GM12878 (cell line): ENCODE measurements at regions of chr7 and their contacts with region 1.

Region 1: DNA sequence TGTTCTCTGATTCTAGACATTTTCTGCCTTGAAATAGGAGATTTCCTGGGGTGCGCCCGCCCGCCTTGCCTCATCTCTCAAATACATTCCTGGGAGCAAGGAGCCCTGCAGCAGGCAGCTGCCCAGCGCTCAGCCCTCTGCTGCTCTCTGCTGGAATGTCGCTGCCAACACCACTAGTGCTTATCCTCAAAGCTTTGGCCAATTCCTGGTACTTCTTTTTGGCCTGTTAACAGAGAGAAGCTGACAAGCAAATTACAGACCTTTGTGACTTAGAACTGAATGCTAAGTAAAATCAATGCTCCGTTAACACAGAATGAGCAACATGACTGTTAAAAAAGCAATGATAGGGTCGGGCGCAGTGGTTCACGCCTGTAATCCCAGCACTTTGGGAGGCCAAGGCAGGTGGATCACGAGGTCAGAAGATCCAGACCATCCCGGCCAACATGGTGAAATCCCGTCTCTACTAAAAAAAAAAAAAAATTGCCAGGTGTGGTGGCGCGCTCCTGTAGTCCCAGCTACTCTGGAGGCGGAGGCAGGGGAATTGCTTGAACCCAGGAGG is 41.9 kb upstream of the SYPL1 start:
- DNase-seq: peak; percentile 45
- ATAC-seq: peak; percentile 94
- H3K4me3 ChIP-seq: no peak overlapping the region
- H3K27ac ChIP-seq: no peak overlapping the region
- H3K4me1 ChIP-seq: peaks cover 26% of the 10 kb centered on the region
- H3K27me3 ChIP-seq: no peaks in the 10 kb centered on the region
- CTCF ChIP-seq: peak; percentile 94 to 97 (median 96)
- EP300 ChIP-seq: no peak
- POLR2A ChIP-seq: no peak
- RAD21 ChIP-seq: peak; percentile 99

Region 2: GRCh38 chr7:106050011-106050745 is 103.8 kb before region 1 on chr7:
- CTCF ChIA-PET with region 1: interaction called, 288 read pairs
- POLR2A ChIA-PET with region 1: no interaction called
- RAD21 ChIA-PET with region 1: interaction called, 133 read pairs
- SMC1A ChIA-PET with region 1: interaction called, 223 read pairs
- in situ Hi-C with region 1: loop called (anchors 5 kb)
- intact Hi-C with region 1: no loop called
- DNase-seq: no peak
- ATAC-seq: no peak
- H3K4me3 ChIP-seq: no peak overlapping the region
- H3K27ac ChIP-seq: no peak overlapping the region
- H3K4me1 ChIP-seq: no peaks in the 10 kb centered on the region
- H3K27me3 ChIP-seq: peaks cover 1 to 5% of the 10 kb centered on the region in 2 experiments; a peak in 2 of 4 replicates
- CTCF ChIP-seq: peak in 1 of 3 experiments; percentile 20; a peak in 2 of 6 replicates
- EP300 ChIP-seq: no peak
- POLR2A ChIP-seq: no peak
- RAD21 ChIP-seq: no peak

Region 3: GRCh38 chr7:106071356-106071998 is 82.5 kb before region 1 on chr7:
- CTCF ChIA-PET with region 1: interaction called, 67 read pairs
- POLR2A ChIA-PET with region 1: interaction called, 20 read pairs
- RAD21 ChIA-PET with region 1: interaction called, 39 read pairs
- SMC1A ChIA-PET with region 1: interaction called, 94 read pairs
- in situ Hi-C with region 1: no loop called
- intact Hi-C with region 1: no loop called
- DNase-seq: peak; percentile 98
- ATAC-seq: peak; percentile 89
- H3K4me3 ChIP-seq: peak overlapping the region; percentile 67
- H3K27ac ChIP-seq: peak overlapping the region; percentile 98
- H3K4me1 ChIP-seq: peaks cover 68% of the 10 kb centered on the region
- H3K27me3 ChIP-seq: no peaks in the 10 kb centered on the region
- CTCF ChIP-seq: no peak
- EP300 ChIP-seq: peak; percentile 71 to 78; a peak in 3 of 4 replicates
- POLR2A ChIP-seq: peak; percentile 79
- RAD21 ChIP-seq: peak; percentile 18; the same call in 1 of the 2 replicates

Region 4: GRCh38 chr7:106100863-106101629 is 52.9 kb before region 1 on chr7:
- CTCF ChIA-PET with region 1: interaction called, 24 read pairs
- POLR2A ChIA-PET with region 1: no interaction called
- RAD21 ChIA-PET with region 1: interaction called, 9 read pairs
- SMC1A ChIA-PET with region 1: interaction called, 13 read pairs
- in situ Hi-C with region 1: no loop called
- intact Hi-C with region 1: no loop called
- DNase-seq: no peak
- ATAC-seq: peak; percentile 8; the same call in 1 of the 3 replicates
- H3K4me3 ChIP-seq: 0 out of 2 replicates have a peak overlapping the region, but pooled peaks have one; percentile 9
- H3K27ac ChIP-seq: no peak overlapping the region
- H3K4me1 ChIP-seq: peaks cover 16% of the 10 kb centered on the region
- H3K27me3 ChIP-seq: no peaks in the 10 kb centered on the region
- CTCF ChIP-seq: no peak
- EP300 ChIP-seq: no peak
- POLR2A ChIP-seq: no peak
- RAD21 ChIP-seq: no peak

Region 5: DNA sequence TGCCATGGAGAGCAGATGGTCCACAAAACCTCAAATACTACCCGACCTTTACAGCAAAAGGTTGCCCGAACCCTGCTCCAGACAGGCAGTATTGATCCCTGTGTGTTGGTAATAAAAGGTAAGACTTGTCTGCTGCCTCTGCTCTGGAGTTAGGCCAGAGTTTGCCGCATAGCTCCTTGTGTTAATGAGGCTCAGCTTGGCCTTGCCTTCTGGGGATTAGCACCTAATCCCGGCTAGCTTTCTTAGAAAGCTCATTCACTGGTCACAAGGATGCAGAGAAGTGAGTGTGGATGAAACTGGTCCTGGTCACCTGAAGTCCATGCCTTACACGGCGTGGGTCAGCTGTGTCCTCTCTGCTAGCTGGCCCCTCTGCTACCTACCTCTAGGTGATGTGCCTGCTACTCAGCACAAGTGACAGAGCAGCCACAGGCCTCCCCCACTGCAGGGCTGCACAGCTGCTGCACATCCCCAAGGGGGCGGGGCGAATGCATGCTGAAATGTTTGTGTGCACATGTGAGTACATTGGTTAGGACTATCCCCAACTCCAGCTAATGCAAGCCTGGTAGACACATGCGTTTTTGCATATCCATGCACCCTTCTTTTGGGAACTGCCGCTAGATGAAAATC is 10.1 kb before region 1 on chr7:
- CTCF ChIA-PET with region 1: interaction called, 21 read pairs
- POLR2A ChIA-PET with region 1: no interaction called
- RAD21 ChIA-PET with region 1: interaction called, 3 read pairs
- SMC1A ChIA-PET with region 1: interaction called, 5 read pairs
- in situ Hi-C with region 1: no loop called
- intact Hi-C with region 1: no loop called
- DNase-seq: no peak
- ATAC-seq: peak; percentile 46
- H3K4me3 ChIP-seq: no peak overlapping the region
- H3K27ac ChIP-seq: no peak overlapping the region
- H3K4me1 ChIP-seq: no peaks in the 10 kb centered on the region
- H3K27me3 ChIP-seq: no peaks in the 10 kb centered on the region
- CTCF ChIP-seq: no peak
- EP300 ChIP-seq: no peak
- POLR2A ChIP-seq: no peak
- RAD21 ChIP-seq: no peak

Region 6: GRCh38 chr7:106768324-106768751 is 614.4 kb after region 1 on chr7:
- CTCF ChIA-PET with region 1: no interaction called
- POLR2A ChIA-PET with region 1: no interaction called
- RAD21 ChIA-PET with region 1: no interaction called
- SMC1A ChIA-PET with region 1: no interaction called
- in situ Hi-C with region 1: no loop called
- intact Hi-C with region 1: no loop called
- DNase-seq: peak; percentile 51
- ATAC-seq: peak; percentile 94
- H3K4me3 ChIP-seq: no peak overlapping the region
- H3K27ac ChIP-seq: peak overlapping the region; percentile 17; the same call in 1 of the 2 replicates
- H3K4me1 ChIP-seq: peaks cover 12% of the 10 kb centered on the region
- H3K27me3 ChIP-seq: no peaks in the 10 kb centered on the region
- CTCF ChIP-seq: 0 out of 6 replicates have a peak, but pooled peaks of 1 of the 3 experiments have one; percentile 16
- EP300 ChIP-seq: no peak; a peak in 1 of 4 replicates
- POLR2A ChIP-seq: no peak
- RAD21 ChIP-seq: no peak